Activated B cell treated with CpG ODN at 0.5 μM for 24 hours (primary cell): ENCODE measurements at regions of chr10 and their contacts with region 1.

Region 1: GRCh38 chr10:22133749-22134624 is 83.8 kb downstream of the EBLN1 start:
- DNase-seq: no peak
- ATAC-seq: peak; percentile 52
- H3K4me3 Mint-ChIP-seq: no peak overlapping the region
- H3K27ac Mint-ChIP-seq: no peak overlapping the region
- H3K4me1 Mint-ChIP-seq: peaks cover 16% of the 10 kb centered on the region
- H3K27me3 Mint-ChIP-seq: peaks cover 5% of the 10 kb centered on the region
- CTCF ChIP-seq: no peak

Region 2: DNA sequence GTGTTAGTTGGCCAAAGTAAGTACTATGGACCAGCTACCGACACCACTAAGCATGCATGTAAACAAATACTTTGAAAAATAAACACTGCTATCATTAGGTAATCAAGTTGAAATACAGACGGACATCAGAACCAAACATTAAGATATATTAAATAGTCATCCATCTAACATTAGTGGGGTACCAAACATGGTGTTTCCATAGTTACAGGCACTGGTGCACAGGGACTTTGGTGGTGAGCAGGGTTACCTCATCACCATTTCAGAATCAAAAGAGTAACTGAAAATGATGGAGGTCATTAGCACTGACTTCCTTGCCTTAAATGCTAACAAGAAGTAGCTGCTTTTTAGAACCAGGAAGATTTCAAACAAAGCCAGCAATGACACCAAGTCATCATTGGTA is 60.0 kb after region 1 on chr10:
- CTCF ChIA-PET with region 1: no interaction called
- POLR2A ChIA-PET with region 1: no interaction called
- intact Hi-C with region 1: loop called (anchors 5 kb)
- DNase-seq: no peak
- ATAC-seq: no peak
- H3K4me3 Mint-ChIP-seq: no peak overlapping the region
- H3K27ac Mint-ChIP-seq: no peak overlapping the region
- H3K4me1 Mint-ChIP-seq: no peaks in the 10 kb centered on the region
- H3K27me3 Mint-ChIP-seq: peaks cover 3% of the 10 kb centered on the region
- CTCF ChIP-seq: no peak